Ovary (tissue), 10 donors: ENCODE measurements at regions of chr6 and their contacts with region 1.

Region 1: DNA sequence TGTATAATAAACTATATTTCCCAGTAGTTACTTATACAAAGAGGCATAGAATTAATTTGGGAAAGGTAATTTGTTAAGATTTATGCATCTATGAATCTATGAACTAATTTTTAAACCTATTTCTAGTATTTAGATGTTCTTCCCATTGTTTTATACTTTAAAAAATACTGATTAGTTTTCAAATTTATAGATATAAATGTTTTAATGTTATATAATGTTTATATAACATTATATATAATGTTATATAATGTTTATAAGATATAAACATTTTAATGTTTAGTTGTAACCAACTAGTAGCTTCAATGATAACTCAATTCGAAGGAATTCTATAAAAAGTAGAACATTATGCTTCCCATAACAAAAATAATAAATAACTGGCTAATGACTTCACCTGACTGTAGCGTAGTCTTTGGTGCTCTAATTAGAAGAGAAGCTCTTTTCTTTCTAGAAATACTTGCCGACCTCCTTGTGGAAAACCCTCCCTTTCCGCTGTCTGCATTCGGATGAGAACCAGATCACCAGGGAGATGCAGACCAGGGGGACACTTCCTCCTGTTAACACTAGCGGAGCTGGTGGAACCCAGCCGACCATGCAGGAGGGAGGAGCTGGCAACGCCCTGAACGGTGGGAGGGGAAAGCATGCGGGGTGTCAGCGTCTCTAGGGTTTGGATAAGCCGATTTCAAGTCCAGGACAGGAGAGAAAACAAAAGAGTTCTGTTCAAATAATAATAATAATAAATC is 158.4 kb downstream of the OR2B2 start:
- DNase-seq: peak; percentile 61 to 74 (median 71)
- H3K4me3 ChIP-seq: peak overlapping the region; percentile 62
- H3K27ac ChIP-seq: peak overlapping the region in 1 of 2 donors; percentile 44
- H3K4me1 ChIP-seq: peaks cover 3% of the 10 kb centered on the region
- H3K27me3 ChIP-seq: no peaks in the 10 kb centered on the region
- CTCF ChIP-seq: no peak
- EP300 ChIP-seq: no peak
- POLR2A ChIP-seq: no peak

Region 2: GRCh38 chr6:27518881-27519795 is 234.7 kb before region 1 on chr6:
- intact Hi-C with region 1: loop called in 2 of 4 experiments (anchors 5 to 10 kb)
- DNase-seq: peak; percentile 63 to 75 (median 74)
- H3K4me3 ChIP-seq: peak overlapping the region; percentile 68
- H3K27ac ChIP-seq: peak overlapping the region; percentile 53 to 89
- H3K4me1 ChIP-seq: no peaks in the 10 kb centered on the region
- H3K27me3 ChIP-seq: no peaks in the 10 kb centered on the region
- CTCF ChIP-seq: peak; percentile 66 to 79 (median 68)
- EP300 ChIP-seq: no peak
- POLR2A ChIP-seq: no peak

Region 3: GRCh38 chr6:27694545-27694870 is 59.3 kb before region 1 on chr6:
- intact Hi-C with region 1: loop called in 1 of 4 experiments (anchors 5 kb)
- DNase-seq: no peak
- H3K4me3 ChIP-seq: peak overlapping the region; percentile 43
- H3K27ac ChIP-seq: no peak overlapping the region
- H3K4me1 ChIP-seq: no peaks in the 10 kb centered on the region
- H3K27me3 ChIP-seq: no peaks in the 10 kb centered on the region
- CTCF ChIP-seq: no peak
- EP300 ChIP-seq: no peak
- POLR2A ChIP-seq: no peak